ENCODE measurements at regions of chr3 and their contacts with region 1.

Region 1: GRCh38 chr3:135895106-135895733 is 70.3 kb upstream of the PPP2R3A start:
- DNase-seq: peak; percentile 52 to 86
- H3K4me3 ChIP-seq: no peak overlapping the region
- CTCF ChIP-seq: peak in 1 of 3 donors; percentile 25
- POLR2A ChIP-seq: no peak

Region 2: GRCh38 chr3:134794950-134795745 is 1100.1 kb before region 1 on chr3 and contains the start of gene EPHB1:
- intact Hi-C with region 1: loop called (anchors 10 kb)
- DNase-seq: peak; percentile 82 to 95
- H3K4me3 ChIP-seq: peak within 1 kb of the TSS; percentile 45
- CTCF ChIP-seq: peak in 1 of 3 donors; percentile 46
- POLR2A ChIP-seq: no peak
- total RNA-seq, gene EPHB1: 11.1 to 14.2 (median 13.0) TPM

Region 3: DNA sequence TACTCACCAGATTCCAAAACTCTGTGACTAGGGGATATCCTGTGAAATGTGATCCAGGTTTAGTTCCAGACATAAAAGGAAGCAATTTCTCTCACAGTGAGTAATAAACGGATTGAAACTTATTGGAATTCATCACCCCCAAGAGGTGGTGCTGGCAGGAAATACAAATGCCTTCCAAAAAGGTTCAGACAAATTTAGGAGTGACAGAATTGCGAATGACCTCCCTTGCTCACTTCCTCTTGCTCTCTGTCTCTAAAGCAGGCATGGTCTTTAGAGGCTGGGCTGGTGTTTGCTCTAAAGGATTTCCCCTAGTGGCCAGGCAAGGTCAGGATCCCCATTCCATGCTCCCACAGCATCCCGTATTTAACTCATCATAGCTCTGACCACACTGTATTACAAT is 379.1 kb before region 1 on chr3:
- intact Hi-C with region 1: loop called (anchors 5 kb)
- DNase-seq: no peak
- H3K4me3 ChIP-seq: no peak overlapping the region
- CTCF ChIP-seq: no peak
- POLR2A ChIP-seq: no peak